ENCODE measurements at regions of chr3 and their contacts with region 1.

Region 1: DNA sequence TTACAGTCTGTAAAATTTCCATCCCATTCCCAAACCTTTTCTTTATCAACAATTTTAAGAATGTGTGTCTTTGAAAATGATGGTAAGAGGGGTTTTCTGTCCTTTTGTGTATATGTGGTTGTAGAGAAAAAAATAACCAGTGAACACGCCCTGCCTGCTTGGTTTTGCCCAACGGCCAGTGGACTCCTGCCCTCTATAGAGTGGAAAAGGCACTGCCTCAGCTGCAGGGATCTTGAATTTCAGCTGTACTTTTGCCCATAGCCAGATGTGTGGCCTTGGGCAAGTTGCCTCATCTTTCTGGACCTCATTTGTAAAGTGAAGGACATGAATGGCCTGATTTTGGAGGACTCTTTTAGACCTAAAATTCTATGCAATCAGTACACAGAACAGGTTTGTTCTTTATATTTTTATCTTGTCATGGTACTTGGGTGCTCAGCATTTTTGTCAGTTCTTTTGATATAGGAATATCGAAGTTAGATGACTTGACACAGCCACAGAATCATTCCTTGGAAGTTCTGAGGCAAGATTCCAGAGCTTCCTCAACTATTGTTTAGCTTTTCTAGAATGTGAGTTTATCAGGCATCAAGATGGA is 81.0 kb downstream of the CLDN11 start:
- DNase-seq: peak; percentile 15
- H3K4me3 ChIP-seq: no peak overlapping the region
- H3K27ac ChIP-seq: no peak overlapping the region
- H3K27me3 ChIP-seq: no peaks in the 10 kb centered on the region
- CTCF ChIP-seq: peak; percentile 60

Region 2: GRCh38 chr3:170357920-170358740 is 141.5 kb before region 1 on chr3:
- CTCF ChIA-PET with region 1: no interaction called
- POLR2A ChIA-PET with region 1: no interaction called
- DNase-seq: no peak
- H3K4me3 ChIP-seq: peak overlapping the region; percentile 81
- H3K27ac ChIP-seq: peak overlapping the region; percentile 85
- H3K27me3 ChIP-seq: no peaks in the 10 kb centered on the region
- CTCF ChIP-seq: peak; percentile 42; the same call in 1 of the 2 replicates

Region 3: GRCh38 chr3:170553788-170554757 is 54.4 kb after region 1 on chr3:
- CTCF ChIA-PET with region 1: no interaction called
- POLR2A ChIA-PET with region 1: no interaction called
- DNase-seq: no peak
- H3K4me3 ChIP-seq: no peak overlapping the region
- H3K27ac ChIP-seq: no peak overlapping the region
- H3K27me3 ChIP-seq: no peaks in the 10 kb centered on the region
- CTCF ChIP-seq: no peak

Region 4: GRCh38 chr3:170584585-170585007 is 84.9 kb after region 1 on chr3:
- CTCF ChIA-PET with region 1: interaction called, 12 read pairs
- POLR2A ChIA-PET with region 1: no interaction called
- DNase-seq: peak; percentile 36
- H3K4me3 ChIP-seq: peak overlapping the region; percentile 60
- H3K27ac ChIP-seq: no peak overlapping the region
- H3K27me3 ChIP-seq: peaks cover 24% of the 10 kb centered on the region
- CTCF ChIP-seq: no peak

Region 5: DNA sequence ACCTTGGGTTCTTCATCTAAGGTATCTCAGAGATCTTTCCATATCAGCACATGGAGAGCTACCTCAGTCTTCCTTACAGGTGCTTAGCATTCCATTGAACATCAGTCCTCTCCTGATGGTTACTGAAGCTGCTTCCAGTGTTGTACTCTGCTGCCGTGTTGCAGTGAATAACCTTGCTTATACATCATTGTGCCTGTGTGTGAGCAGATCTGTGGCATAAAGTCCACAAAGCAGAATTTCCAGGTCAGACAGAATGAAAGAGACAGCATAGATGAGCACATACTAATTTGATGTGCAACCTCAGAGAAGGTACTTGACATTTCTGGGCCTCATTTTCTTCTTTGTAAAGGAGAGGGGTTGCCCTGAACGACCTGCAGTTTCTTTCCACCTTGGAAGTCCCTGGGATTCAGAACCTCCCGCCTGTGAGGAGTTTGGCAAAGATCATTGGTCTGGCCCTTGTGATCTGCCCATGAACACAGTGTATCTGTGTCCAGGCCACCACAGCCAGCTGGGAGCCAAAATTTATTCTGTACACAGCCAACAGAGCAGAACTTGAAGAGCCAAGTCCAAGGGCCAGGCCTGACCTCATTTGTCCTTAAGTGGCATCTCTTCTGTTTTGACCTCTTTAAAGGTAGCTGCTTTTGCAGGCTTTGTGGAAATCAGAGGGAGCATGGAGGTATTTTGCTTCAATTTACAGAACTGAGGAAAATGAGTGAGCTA is 143.4 kb after region 1 on chr3:
- CTCF ChIA-PET with region 1: no interaction called
- POLR2A ChIA-PET with region 1: no interaction called
- DNase-seq: no peak
- H3K4me3 ChIP-seq: no peak overlapping the region
- H3K27ac ChIP-seq: no peak overlapping the region
- H3K27me3 ChIP-seq: no peaks in the 10 kb centered on the region
- CTCF ChIP-seq: no peak

Measured in AG04450 (cell line).